Naive thymus-derived CD4-positive, alpha-beta T cell (primary cell): ENCODE measurements at regions of chr21 and their contacts with region 1.

Region 1: DNA sequence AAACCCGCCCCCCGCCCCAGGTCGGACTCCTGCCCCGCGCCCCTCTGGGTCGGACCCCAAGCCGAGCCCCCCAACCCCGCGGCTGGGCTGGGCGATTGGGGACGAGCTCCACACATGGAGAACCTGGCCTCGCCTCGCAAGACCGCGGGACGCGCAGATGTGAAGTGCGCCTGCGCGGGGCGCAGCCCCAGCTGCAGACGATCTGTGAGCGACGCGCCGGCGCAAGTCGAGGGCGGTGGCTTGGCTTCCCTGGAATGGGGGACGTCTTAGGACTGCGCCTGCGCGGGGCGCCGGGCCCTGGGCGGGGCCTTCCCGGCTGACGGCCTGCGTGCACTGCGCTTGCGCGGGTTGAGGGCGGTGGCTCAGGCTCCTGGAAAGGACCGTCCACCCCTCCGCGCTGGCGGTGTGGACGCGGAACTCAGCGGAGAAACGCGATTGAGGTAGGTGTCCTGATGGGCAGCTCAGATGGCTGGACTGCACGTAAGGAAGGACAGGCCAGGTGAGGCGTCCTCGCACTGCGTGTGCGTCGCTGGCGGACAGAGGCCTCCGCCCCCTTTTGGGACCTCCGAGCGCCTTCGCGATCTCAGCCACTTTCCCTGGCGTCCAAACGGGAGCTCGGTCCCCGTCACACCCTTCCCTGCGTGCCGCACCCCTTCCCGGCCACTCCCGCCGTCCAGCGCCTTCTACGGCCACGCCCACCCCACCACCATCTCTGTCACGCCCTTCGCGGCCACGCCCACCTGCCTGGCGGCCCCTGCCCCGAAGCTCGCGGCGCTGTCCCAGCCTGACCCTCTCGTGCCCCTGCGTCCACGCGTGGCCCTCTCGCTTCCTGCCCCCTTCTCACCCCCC is at the start of gene PRMT2:
- DNase-seq: peak; percentile 96 to 99 (median 99)
- ATAC-seq: peak; percentile 91
- H3K4me3 ChIP-seq: peak within 1 kb of the TSS; percentile 99
- H3K4me3 Mint-ChIP-seq: peak within 1 kb of the TSS; percentile 85 to 99 (median 98)
- H3K27ac ChIP-seq: peak within 1 kb of the TSS; percentile 93
- H3K27ac Mint-ChIP-seq: peak within 1 kb of the TSS; percentile 89 to 100 (median 97)
- H3K4me1 ChIP-seq: peaks cover 47 to 48% of the 10 kb centered on the region in 2 donors
- H3K4me1 Mint-ChIP-seq: peaks cover 53 to 85% (median 75%) of the 10 kb centered on the region in 7 donors
- H3K27me3 ChIP-seq: no peaks in the 10 kb centered on the region
- H3K27me3 Mint-ChIP-seq: peaks cover 0 to 4% (median 0%) of the 10 kb centered on the region in 5 donors
- total RNA-seq, gene PRMT2: 125 to 268 (median 177) TPM

Region 2: GRCh38 chr21:46116776-46117585 is 518.6 kb before region 1 on chr21:
- CTCF ChIA-PET with region 1: no interaction called
- POLR2A ChIA-PET with region 1: no interaction called
- intact Hi-C with region 1: no loop called
- DNase-seq: peak in 1 of 9 donors; percentile 12
- ATAC-seq: no peak
- H3K4me3 ChIP-seq: no peak overlapping the region
- H3K4me3 Mint-ChIP-seq: no peak overlapping the region
- H3K27ac ChIP-seq: no peak overlapping the region
- H3K27ac Mint-ChIP-seq: no peak overlapping the region
- H3K4me1 ChIP-seq: no peaks in the 10 kb centered on the region
- H3K4me1 Mint-ChIP-seq: no peaks in the 10 kb centered on the region
- H3K27me3 ChIP-seq: no peaks in the 10 kb centered on the region
- H3K27me3 Mint-ChIP-seq: no peaks in the 10 kb centered on the region

Region 3: DNA sequence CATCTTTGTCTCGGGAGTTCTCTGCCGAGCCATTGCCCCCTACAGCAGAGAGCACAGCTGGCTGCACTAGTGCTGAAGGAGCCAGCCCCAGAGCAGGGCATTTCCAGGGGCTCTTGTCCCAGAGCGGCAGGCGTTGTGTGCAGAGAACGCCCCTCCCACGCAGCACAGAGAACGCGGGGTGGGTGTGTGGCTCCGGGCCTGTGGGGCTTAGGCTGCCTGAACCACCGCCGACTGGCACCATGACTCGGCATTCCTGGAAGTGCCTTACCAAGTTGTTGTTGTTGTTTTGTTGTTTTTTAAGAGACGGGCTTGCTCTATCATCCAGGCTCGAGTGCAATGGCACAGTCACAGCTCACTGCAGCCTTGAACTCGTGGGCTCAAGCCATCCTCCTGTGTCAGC is 192.6 kb before region 1 on chr21:
- CTCF ChIA-PET with region 1: no interaction called
- POLR2A ChIA-PET with region 1: no interaction called
- intact Hi-C with region 1: no loop called
- DNase-seq: no peak
- ATAC-seq: no peak
- H3K4me3 ChIP-seq: no peak overlapping the region
- H3K4me3 Mint-ChIP-seq: no peak overlapping the region
- H3K27ac ChIP-seq: no peak overlapping the region
- H3K27ac Mint-ChIP-seq: peak overlapping the region in 3 of 9 donors; percentile 23 to 63 (median 36)
- H3K4me1 ChIP-seq: no peaks in the 10 kb centered on the region
- H3K4me1 Mint-ChIP-seq: peaks cover 0 to 8% (median 2%) of the 10 kb centered on the region in 7 donors
- H3K27me3 ChIP-seq: no peaks in the 10 kb centered on the region
- H3K27me3 Mint-ChIP-seq: no peaks in the 10 kb centered on the region

Region 4: DNA sequence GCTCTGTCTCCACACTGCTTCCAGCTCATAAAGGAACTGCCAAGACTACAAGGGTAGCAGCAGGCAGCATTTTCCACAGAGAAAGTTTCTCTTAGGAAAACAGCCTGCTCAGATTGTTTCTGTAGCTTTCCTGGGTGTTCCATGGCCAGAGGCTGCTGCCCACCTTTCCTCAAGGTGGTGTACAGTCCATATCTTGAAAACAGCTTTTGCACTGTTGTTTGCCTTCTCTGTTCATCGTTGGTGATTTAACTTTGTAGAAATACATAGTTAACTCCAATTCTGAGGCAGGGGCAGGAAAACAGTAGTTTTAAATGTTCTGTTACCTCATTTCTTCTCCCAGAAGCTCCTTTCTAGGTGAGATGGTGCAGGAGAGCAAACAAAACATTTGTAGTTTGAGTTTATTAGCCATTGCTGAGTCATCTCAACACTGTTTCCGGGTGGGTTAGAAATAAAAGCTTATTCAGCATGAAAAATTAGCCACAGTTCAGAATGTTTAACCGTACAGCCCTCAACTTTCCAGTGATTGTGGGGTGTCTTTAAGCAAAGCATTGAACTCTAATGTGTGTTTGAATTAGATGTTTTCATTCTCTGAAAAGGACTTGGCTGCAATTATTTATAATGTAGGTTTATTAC is 135.2 kb before region 1 on chr21:
- CTCF ChIA-PET with region 1: interaction called, 4 read pairs
- POLR2A ChIA-PET with region 1: interaction called, 13 read pairs
- intact Hi-C with region 1: no loop called
- DNase-seq: peak in 4 of 9 donors; percentile 8 to 14 (median 11)
- ATAC-seq: no peak
- H3K4me3 ChIP-seq: no peak overlapping the region
- H3K4me3 Mint-ChIP-seq: peak overlapping the region in 3 of 10 donors; percentile 21 to 44 (median 33)
- H3K27ac ChIP-seq: no peak overlapping the region
- H3K27ac Mint-ChIP-seq: peak overlapping the region; percentile 21 to 84 (median 80)
- H3K4me1 ChIP-seq: peaks cover 8 to 12% of the 10 kb centered on the region in 2 donors
- H3K4me1 Mint-ChIP-seq: peaks cover 13 to 45% (median 31%) of the 10 kb centered on the region in 7 donors
- H3K27me3 ChIP-seq: no peaks in the 10 kb centered on the region
- H3K27me3 Mint-ChIP-seq: no peaks in the 10 kb centered on the region

Region 5: DNA sequence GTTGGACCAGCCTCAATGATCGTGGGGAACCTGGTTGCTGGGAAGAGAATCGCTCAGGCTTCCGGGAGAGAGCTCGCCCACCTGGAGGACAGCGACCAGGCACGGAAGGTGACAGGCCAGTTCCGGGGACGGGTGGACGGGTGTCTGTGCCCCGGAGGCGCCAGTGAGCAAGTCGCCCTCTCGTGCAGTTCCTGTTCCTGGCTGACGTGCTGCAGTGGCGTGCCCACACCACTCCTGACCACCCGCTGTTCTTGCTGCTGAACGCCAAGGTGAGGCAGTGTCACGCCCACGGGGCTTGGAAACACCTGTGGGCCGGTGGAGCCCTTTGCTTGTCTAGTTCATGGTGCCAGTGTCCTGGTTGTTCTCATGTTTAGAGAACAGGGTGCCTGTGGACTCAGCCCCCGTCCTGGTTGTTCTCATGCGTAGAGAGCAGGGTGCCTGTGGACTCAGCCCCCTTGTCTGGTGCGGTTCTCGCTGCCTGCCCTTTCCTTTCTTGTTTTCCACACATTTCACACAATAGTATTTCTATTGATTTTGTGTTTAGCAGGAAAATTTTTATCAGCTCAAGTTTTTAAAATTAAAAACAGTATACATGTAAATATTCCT is 83.8 kb before region 1 on chr21:
- CTCF ChIA-PET with region 1: interaction called, 15 read pairs
- POLR2A ChIA-PET with region 1: interaction called, 226 read pairs
- intact Hi-C with region 1: loop called in 1 of 2 experiments (anchors 1 kb)
- DNase-seq: peak; percentile 16 to 40 (median 30)
- ATAC-seq: peak; percentile 49
- H3K4me3 ChIP-seq: peak overlapping the region; percentile 22
- H3K4me3 Mint-ChIP-seq: peak overlapping the region; percentile 60 to 94 (median 78)
- H3K27ac ChIP-seq: peak overlapping the region; percentile 83
- H3K27ac Mint-ChIP-seq: peak overlapping the region; percentile 84 to 100 (median 99)
- H3K4me1 ChIP-seq: peaks cover 48 to 77% of the 10 kb centered on the region in 2 donors
- H3K4me1 Mint-ChIP-seq: peaks cover 40 to 95% (median 80%) of the 10 kb centered on the region in 7 donors
- H3K27me3 ChIP-seq: no peaks in the 10 kb centered on the region
- H3K27me3 Mint-ChIP-seq: no peaks in the 10 kb centered on the region

Region 6: DNA sequence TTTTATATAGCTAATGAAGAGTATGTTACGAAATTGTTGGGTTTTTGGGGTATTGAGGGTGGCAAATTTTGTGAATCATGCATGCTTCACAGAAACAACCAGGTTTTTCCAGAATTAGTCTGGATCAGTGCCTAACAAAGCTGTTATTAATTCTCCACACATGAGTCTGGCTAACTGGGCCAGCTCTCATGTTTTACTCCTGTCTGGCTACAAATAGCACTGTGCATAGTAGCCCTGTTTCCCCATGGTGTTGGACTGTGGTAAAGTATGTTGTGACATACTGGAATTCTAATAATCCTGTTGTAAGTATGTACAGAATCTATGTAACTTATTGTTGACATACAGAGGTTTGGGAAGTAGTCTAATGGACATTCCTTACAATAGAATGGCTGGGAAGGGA is 66.5 kb before region 1 on chr21:
- CTCF ChIA-PET with region 1: no interaction called
- POLR2A ChIA-PET with region 1: interaction called, 219 read pairs
- intact Hi-C with region 1: no loop called
- DNase-seq: no peak
- ATAC-seq: no peak
- H3K4me3 ChIP-seq: no peak overlapping the region
- H3K4me3 Mint-ChIP-seq: peak overlapping the region in 1 of 10 donors; percentile 71
- H3K27ac ChIP-seq: no peak overlapping the region
- H3K27ac Mint-ChIP-seq: peak overlapping the region in 6 of 9 donors; percentile 14 to 96 (median 52)
- H3K4me1 ChIP-seq: peaks cover 0 to 17% of the 10 kb centered on the region in 2 donors
- H3K4me1 Mint-ChIP-seq: peaks cover 10 to 78% (median 61%) of the 10 kb centered on the region in 7 donors
- H3K27me3 ChIP-seq: no peaks in the 10 kb centered on the region
- H3K27me3 Mint-ChIP-seq: no peaks in the 10 kb centered on the region

Region 7: GRCh38 chr21:46605767-46606426 is 29.7 kb before region 1 on chr21:
- CTCF ChIA-PET with region 1: no interaction called
- POLR2A ChIA-PET with region 1: interaction called, 19 read pairs
- intact Hi-C with region 1: loop called in 1 of 2 experiments (anchors 1 kb)
- DNase-seq: peak in 8 of 9 donors; percentile 20 to 54 (median 43)
- ATAC-seq: peak; percentile 97
- H3K4me3 ChIP-seq: peak overlapping the region; percentile 22
- H3K4me3 Mint-ChIP-seq: peak overlapping the region; percentile 64 to 88 (median 73)
- H3K27ac ChIP-seq: peak overlapping the region; percentile 53
- H3K27ac Mint-ChIP-seq: peak overlapping the region; percentile 56 to 94 (median 89)
- H3K4me1 ChIP-seq: peaks cover 25 to 34% of the 10 kb centered on the region in 2 donors
- H3K4me1 Mint-ChIP-seq: peaks cover 28 to 82% (median 64%) of the 10 kb centered on the region in 7 donors
- H3K27me3 ChIP-seq: no peaks in the 10 kb centered on the region
- H3K27me3 Mint-ChIP-seq: peaks cover 0 to 1% (median 0%) of the 10 kb centered on the region in 5 donors

Region 8: GRCh38 chr21:46661211-46661625 is 25.7 kb after region 1 on chr21:
- CTCF ChIA-PET with region 1: no interaction called
- POLR2A ChIA-PET with region 1: interaction called, 4 read pairs
- intact Hi-C with region 1: loop called in 1 of 2 experiments (anchors 2 kb)
- DNase-seq: peak; percentile 18 to 63 (median 47)
- ATAC-seq: peak; percentile 81
- H3K4me3 ChIP-seq: no peak overlapping the region
- H3K4me3 Mint-ChIP-seq: peak overlapping the region in 5 of 10 donors; percentile 15 to 53 (median 26)
- H3K27ac ChIP-seq: no peak overlapping the region
- H3K27ac Mint-ChIP-seq: peak overlapping the region in 3 of 9 donors; percentile 22 to 76 (median 41)
- H3K4me1 ChIP-seq: peaks cover 0 to 4% of the 10 kb centered on the region in 2 donors
- H3K4me1 Mint-ChIP-seq: peaks cover 8 to 51% (median 36%) of the 10 kb centered on the region in 7 donors
- H3K27me3 ChIP-seq: no peaks in the 10 kb centered on the region
- H3K27me3 Mint-ChIP-seq: no peaks in the 10 kb centered on the region